ENCODE measurements at regions of chr1 and their contacts with region 1.

Region 1: DNA sequence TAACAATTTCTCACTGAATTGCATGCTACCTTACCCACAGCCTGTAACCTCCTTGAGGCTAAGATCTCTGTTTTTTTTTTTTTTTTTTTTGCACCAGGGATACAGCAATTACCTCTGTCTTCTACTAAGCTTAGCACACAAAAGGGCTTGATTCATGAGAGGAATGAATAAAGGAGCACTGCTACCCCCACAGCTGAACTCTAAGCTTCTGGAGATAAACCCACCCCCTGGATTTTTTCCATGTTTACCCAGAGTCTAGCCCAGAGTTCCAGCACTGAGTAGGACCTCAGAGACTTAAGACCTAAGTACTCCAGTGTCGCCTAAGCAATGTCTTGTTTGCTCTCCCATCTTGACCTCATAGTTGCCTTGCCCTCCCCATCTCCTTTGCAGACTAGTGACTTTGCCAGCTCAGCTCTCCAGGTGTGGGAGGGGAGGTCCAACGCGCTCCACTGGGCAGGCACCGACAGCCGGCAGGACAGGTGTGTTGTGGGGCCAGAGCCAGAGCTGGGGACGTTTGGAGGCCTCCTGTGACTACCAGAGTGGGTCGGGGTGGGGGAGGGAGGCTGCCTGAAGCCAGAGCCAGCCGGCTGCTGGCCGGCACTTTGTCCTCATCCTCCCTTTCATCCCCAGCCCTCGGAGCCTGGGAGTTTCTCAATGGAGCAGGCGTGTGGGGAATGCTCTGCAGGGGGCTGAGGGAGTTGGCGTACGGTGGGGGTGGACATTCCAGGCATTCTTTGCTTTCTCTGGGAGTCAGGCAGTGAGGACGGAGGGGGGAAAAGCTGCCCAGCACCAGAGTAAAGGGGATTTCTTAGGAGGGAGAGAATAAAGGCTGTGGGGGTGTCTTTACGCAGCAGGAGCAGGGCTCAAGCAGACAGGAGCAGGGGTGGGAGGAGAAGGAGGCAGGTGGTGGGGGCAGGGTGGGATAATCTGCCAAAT is 20.4 kb downstream of the NUAK2 start:
- DNase-seq: peak; percentile 94 to 99
- H3K4me3 ChIP-seq: peak overlapping the region in 3 of 4 experiments; percentile 27 to 43 (median 34); a peak in 3 of 8 replicates
- H3K27ac ChIP-seq: peak overlapping the region; percentile 98
- H3K4me1 ChIP-seq: peaks cover 21 to 38% (median 31%) of the 10 kb centered on the region in 4 experiments
- H3K27me3 ChIP-seq: no peaks in the 10 kb centered on the region; a peak in 1 of 7 replicates
- CTCF ChIP-seq: no peak
- EP300 ChIP-seq: peak; percentile 14 to 99
- POLR2A ChIP-seq: peak; percentile 61 to 91
- RAD21 ChIP-seq: peak; percentile 23 to 28; a peak in 2 of 4 replicates

Region 2: DNA sequence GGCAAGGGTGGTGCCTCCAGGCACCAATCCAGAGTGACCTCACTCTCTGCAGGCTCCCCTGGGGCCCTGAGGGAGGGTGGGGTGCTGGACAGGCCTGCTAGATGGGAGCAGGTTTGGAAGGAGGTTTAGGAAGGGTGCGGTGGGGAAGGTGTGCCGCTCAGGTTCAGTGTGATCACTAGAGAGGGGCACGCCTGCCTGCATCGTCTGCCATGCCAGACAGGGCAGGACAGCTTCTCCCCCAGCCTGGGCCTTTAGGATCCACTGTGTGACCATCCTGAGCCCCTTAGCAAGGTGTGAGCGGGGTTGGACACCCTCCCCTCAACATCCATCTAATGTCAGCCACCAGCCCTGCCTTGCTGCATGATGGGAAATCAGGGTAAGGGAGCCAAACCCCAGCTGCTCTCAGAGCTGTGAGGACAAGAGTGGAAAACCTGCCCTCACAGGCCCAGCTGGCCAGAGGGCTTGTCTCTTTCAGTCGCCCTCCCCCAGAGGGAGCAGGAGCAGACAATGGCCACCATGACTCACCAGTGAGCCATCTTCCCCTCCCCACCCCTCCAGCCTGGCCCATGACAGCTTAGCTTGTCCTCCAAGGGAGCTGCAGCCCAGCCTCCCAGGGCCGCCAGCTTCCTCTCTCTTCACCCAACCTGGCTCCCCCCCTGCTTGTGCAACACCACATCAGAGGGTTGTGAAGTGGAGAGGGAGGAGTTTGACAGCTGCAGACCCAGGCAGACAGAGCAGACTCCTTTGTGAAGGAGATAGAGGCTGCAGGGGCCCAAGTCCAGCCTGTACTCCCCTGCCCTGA is 16.6 kb before region 1 on chr1:
- CTCF ChIA-PET with region 1: interaction called, 2,424 read pairs
- POLR2A ChIA-PET with region 1: interaction called, 21 read pairs
- DNase-seq: peak; percentile 73 to 87
- H3K4me3 ChIP-seq: no peak overlapping the region
- H3K27ac ChIP-seq: peak overlapping the region; percentile 56; the same call in 1 of the 2 replicates
- H3K4me1 ChIP-seq: peaks cover 9 to 26% (median 18%) of the 10 kb centered on the region in 4 experiments
- H3K27me3 ChIP-seq: no peaks in the 10 kb centered on the region; a peak in 1 of 7 replicates
- CTCF ChIP-seq: no peak
- EP300 ChIP-seq: no peak
- POLR2A ChIP-seq: peak in 1 of 2 experiments; percentile 62; a peak in 2 of 3 replicates
- RAD21 ChIP-seq: no peak; a peak in 2 of 4 replicates

Region 3: GRCh38 chr1:205313563-205314308 is 12.6 kb after region 1 on chr1:
- CTCF ChIA-PET with region 1: interaction called, 313 read pairs
- POLR2A ChIA-PET with region 1: interaction called, 134 read pairs
- DNase-seq: peak; percentile 79 to 88
- H3K4me3 ChIP-seq: peak overlapping the region in 3 of 4 experiments; percentile 6 to 46 (median 21); a peak in 5 of 8 replicates
- H3K27ac ChIP-seq: peak overlapping the region; percentile 91
- H3K4me1 ChIP-seq: peaks cover 29 to 53% (median 42%) of the 10 kb centered on the region in 4 experiments
- H3K27me3 ChIP-seq: no peaks in the 10 kb centered on the region
- CTCF ChIP-seq: no peak
- EP300 ChIP-seq: 0 out of 3 replicates have a peak, but pooled peaks of 1 of the 2 experiments have one; percentile 51
- POLR2A ChIP-seq: peak; percentile 75 to 83
- RAD21 ChIP-seq: 0 out of 4 replicates have a peak, but pooled peaks of 1 of the 2 experiments have one; percentile 8

Region 4: DNA sequence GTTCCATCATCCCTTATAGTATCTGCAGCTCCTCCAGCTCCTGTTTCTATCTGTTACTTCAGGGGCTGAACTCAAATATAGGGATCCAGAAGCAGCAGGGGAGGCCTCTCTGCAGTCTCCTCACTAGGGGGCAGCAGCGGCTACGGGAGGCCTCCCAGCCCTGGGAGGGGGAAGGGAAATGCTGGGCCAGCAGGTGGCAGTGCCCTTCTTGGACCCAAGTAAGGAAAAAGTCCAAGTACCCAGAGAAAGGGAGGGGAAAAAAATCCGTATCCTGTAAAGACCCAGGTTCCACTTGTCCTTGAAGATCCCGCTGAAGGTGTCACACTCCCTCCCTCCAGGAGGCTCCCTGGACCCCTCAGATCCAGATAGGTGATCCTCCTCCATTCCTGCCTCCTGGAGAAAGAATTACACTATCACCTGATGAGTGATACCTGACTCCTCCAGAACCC is 34.5 kb after region 1 on chr1:
- CTCF ChIA-PET with region 1: interaction called, 8 read pairs
- POLR2A ChIA-PET with region 1: interaction called, 11 read pairs
- DNase-seq: peak; percentile 78 to 91
- H3K4me3 ChIP-seq: no peak overlapping the region
- H3K27ac ChIP-seq: no peak overlapping the region
- H3K4me1 ChIP-seq: peaks cover 0 to 3% (median under 1%) of the 10 kb centered on the region in 4 experiments; a peak in 4 of 7 replicates
- H3K27me3 ChIP-seq: no peaks in the 10 kb centered on the region; a peak in 3 of 7 replicates
- CTCF ChIP-seq: peak; percentile 93 to 99 (median 94)
- EP300 ChIP-seq: no peak
- POLR2A ChIP-seq: no peak
- RAD21 ChIP-seq: peak; percentile 78 to 89

Region 5: GRCh38 chr1:205536759-205537361 is 235.7 kb after region 1 on chr1:
- CTCF ChIA-PET with region 1: no interaction called
- POLR2A ChIA-PET with region 1: no interaction called
- DNase-seq: peak in 1 of 2 experiments; percentile 41
- H3K4me3 ChIP-seq: no peak overlapping the region
- H3K27ac ChIP-seq: no peak overlapping the region
- H3K4me1 ChIP-seq: no peaks in the 10 kb centered on the region; a peak in 2 of 7 replicates
- H3K27me3 ChIP-seq: peaks cover 0 to 19% (median 15%) of the 10 kb centered on the region in 4 experiments; a peak in 6 of 7 replicates
- CTCF ChIP-seq: no peak
- EP300 ChIP-seq: no peak
- POLR2A ChIP-seq: no peak
- RAD21 ChIP-seq: no peak

Region 6: GRCh38 chr1:205907794-205908193 is 606.6 kb after region 1 on chr1:
- CTCF ChIA-PET with region 1: no interaction called
- POLR2A ChIA-PET with region 1: no interaction called
- DNase-seq: no peak
- H3K4me3 ChIP-seq: no peak overlapping the region
- H3K27ac ChIP-seq: no peak overlapping the region
- H3K4me1 ChIP-seq: no peaks in the 10 kb centered on the region
- H3K27me3 ChIP-seq: no peaks in the 10 kb centered on the region
- CTCF ChIP-seq: peak; percentile 70 to 79 (median 71)
- EP300 ChIP-seq: no peak
- POLR2A ChIP-seq: no peak
- RAD21 ChIP-seq: peak; percentile 71 to 79